ENCODE measurements at regions of chr6 and their contacts with region 1.

Region 1: DNA sequence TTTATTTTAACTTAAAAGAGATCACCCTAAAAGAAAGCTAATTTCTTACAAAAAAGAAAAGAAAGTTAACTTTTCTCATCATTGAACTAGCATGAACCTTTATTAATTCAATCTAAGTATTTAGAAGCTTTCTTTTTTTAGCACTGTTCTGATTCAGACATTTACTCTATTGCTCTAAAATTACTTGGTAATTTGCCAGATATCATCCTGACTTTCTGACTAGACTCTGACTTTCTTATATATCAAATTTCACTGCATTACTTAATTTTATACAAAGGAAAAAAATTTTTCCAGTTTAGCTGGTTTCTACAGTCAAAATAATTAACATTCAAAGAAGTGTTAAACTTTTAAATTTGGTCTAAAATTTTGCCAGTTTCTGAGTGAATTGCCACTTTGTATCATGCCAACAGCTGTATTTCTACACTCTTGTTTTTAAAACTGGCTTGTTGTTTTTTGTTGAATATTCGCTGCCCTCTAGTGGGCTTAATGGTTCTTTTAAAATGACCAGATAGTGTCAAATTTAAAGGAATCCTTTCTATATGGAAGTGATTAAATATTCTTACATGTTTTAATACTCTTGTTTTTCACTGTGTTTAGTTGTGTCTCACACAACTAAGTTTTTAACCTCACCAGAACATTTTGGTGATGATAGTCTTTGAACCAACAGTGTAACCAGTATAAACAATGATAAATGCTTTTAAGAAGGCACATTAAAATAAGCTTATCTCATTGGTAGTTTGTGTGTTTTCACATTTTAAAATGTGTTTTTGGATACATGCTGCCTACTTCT is 102.0 kb downstream of the POPDC3 start:
- H3K4me3 ChIP-seq: no peak overlapping the region
- H3K27ac ChIP-seq: no peak overlapping the region
- H3K4me1 ChIP-seq: peaks cover 6% of the 10 kb centered on the region
- CTCF ChIP-seq: no peak; the same call in 1 of the 2 replicates

Region 2: GRCh38 chr6:104682722-104683643 is 394.8 kb before region 1 on chr6:
- CTCF ChIA-PET with region 1: interaction called, 20 read pairs
- POLR2A ChIA-PET with region 1: no interaction called
- H3K4me3 ChIP-seq: no peak overlapping the region
- H3K27ac ChIP-seq: no peak overlapping the region
- H3K4me1 ChIP-seq: peaks cover 5% of the 10 kb centered on the region; the same call in 1 of the 2 replicates
- CTCF ChIP-seq: no peak

Region 3: GRCh38 chr6:104789770-104790190 is 288.0 kb before region 1 on chr6:
- CTCF ChIA-PET with region 1: interaction called, 47 read pairs
- POLR2A ChIA-PET with region 1: no interaction called
- H3K4me3 ChIP-seq: no peak overlapping the region
- H3K27ac ChIP-seq: no peak overlapping the region
- H3K4me1 ChIP-seq: no peaks in the 10 kb centered on the region
- CTCF ChIP-seq: peak; percentile 47; the same call in 1 of the 2 replicates

Region 4: DNA sequence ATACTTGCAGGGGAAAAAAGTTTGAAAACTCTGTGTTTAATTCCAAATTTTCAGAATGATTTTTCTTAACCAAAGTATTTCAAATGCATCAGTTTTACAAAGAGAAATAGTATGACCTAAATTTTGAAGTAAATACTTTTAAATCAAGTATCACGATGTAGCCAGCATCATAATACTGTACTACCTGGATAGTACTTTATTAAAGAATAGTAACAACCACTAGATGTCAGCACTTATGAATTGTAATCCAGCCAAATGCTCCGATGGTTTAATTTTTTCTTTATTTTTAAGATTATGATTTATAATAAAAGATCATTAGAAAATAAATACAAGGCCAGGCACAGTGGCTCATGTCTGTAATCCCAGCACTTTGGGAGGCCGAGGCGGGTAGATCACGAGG is 180.9 kb before region 1 on chr6:
- CTCF ChIA-PET with region 1: interaction called, 12 read pairs
- POLR2A ChIA-PET with region 1: no interaction called
- H3K4me3 ChIP-seq: no peak overlapping the region
- H3K27ac ChIP-seq: no peak overlapping the region
- H3K4me1 ChIP-seq: no peaks in the 10 kb centered on the region
- CTCF ChIP-seq: no peak

Region 5: GRCh38 chr6:104940881-104941728 is 136.7 kb before region 1 on chr6:
- CTCF ChIA-PET with region 1: interaction called, 27 read pairs
- POLR2A ChIA-PET with region 1: no interaction called
- H3K4me3 ChIP-seq: peak overlapping the region; percentile 54
- H3K27ac ChIP-seq: peak overlapping the region; percentile 44; the same call in 1 of the 2 replicates
- H3K4me1 ChIP-seq: no peaks in the 10 kb centered on the region; the same call in 1 of the 2 replicates
- CTCF ChIP-seq: peak; percentile 73; the same call in 1 of the 2 replicates

Region 6: GRCh38 chr6:104955927-104956730 is 121.7 kb before region 1 on chr6:
- CTCF ChIA-PET with region 1: interaction called, 41 read pairs
- POLR2A ChIA-PET with region 1: interaction called, 3 read pairs
- H3K4me3 ChIP-seq: peak overlapping the region; percentile 80
- H3K27ac ChIP-seq: peak overlapping the region; percentile 85
- H3K4me1 ChIP-seq: peaks cover 3% of the 10 kb centered on the region; the same call in 1 of the 2 replicates
- CTCF ChIP-seq: peak; percentile 47; the same call in 1 of the 2 replicates

Region 7: GRCh38 chr6:104995989-104996617 is 81.7 kb before region 1 on chr6:
- CTCF ChIA-PET with region 1: interaction called, 29 read pairs
- POLR2A ChIA-PET with region 1: no interaction called
- H3K4me3 ChIP-seq: no peak overlapping the region
- H3K27ac ChIP-seq: no peak overlapping the region
- H3K4me1 ChIP-seq: no peaks in the 10 kb centered on the region
- CTCF ChIP-seq: no peak

Region 8: DNA sequence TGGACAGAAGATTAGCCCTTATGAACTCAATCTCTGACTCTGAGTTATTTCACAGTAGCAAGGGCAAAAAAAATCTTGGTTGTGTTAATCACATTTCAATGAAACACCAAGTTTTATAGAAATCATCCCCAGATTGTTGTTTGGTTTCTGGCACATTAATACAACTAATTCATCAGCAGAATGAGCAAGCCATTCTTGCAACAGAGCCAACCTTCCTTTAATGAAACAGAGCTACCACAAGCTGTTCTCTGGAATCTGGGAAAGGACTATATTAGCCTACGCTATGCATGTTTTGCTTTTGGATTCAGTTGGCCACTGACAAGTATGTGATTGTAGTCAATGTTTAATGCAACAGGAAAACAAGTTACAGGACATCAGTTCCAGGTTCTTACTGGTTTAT is 115.9 kb after region 1 on chr6:
- CTCF ChIA-PET with region 1: no interaction called
- POLR2A ChIA-PET with region 1: no interaction called
- H3K4me3 ChIP-seq: no peak overlapping the region
- H3K27ac ChIP-seq: no peak overlapping the region
- H3K4me1 ChIP-seq: no peaks in the 10 kb centered on the region
- CTCF ChIP-seq: no peak